ENCODE measurements at regions of chr4 and their contacts with region 1.

Region 1: DNA sequence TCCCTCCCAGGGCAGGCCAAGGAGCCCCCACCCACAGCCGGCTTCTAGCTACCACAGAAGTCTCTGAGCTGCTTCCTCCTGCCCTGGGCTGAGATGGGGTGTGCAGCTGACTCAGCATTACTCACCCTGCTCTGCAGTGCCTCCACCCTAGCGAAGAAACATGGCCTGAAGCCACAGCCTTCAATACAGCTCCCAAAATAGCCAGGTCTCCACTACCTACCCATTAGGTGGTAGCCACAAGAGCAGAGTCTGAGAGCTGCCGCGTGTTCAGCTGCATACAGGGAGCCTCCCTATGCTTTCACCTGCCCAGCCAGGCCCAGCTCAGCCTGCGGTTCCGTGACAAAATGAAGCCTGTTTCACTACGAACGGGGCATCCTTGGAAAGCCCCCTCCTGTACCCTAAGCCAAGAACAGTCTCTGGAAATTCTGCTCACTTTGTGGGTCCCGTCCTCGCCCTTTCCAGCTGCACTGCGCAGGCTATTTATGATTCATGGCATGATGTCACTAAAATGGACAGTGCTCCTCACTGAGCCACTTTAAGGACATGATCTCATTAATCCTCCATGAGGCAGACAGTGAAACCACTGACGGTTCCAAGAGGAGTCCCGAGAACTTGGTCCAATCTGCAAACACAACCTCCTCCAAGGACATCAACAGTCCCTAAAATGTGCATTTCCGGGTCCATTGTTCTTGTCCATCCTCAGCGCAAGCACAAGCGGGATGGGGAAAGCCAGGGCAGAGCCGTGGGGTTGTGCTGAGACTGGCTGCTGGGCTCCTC is 20.2 kb downstream of the WDR1 start:
- DNase-seq: peak; percentile 71
- H3K4me3 ChIP-seq: no peak overlapping the region
- H3K27ac ChIP-seq: peak overlapping the region; percentile 79
- H3K4me1 ChIP-seq: peaks cover 82% of the 10 kb centered on the region
- H3K27me3 ChIP-seq: no peaks in the 10 kb centered on the region
- CTCF ChIP-seq: no peak
- POLR2A ChIP-seq: peak; percentile 45

Region 2: GRCh38 chr4:9792381-9792780 is 304.0 kb before region 1 on chr4:
- CTCF ChIA-PET with region 1: no interaction called
- POLR2A ChIA-PET with region 1: no interaction called
- dilution Hi-C with region 1: no loop called
- intact Hi-C with region 1: no loop called
- DNase-seq: no peak
- H3K4me3 ChIP-seq: no peak overlapping the region
- H3K27ac ChIP-seq: no peak overlapping the region
- H3K4me1 ChIP-seq: no peaks in the 10 kb centered on the region
- H3K27me3 ChIP-seq: no peaks in the 10 kb centered on the region
- CTCF ChIP-seq: no peak
- POLR2A ChIP-seq: no peak

Region 3: DNA sequence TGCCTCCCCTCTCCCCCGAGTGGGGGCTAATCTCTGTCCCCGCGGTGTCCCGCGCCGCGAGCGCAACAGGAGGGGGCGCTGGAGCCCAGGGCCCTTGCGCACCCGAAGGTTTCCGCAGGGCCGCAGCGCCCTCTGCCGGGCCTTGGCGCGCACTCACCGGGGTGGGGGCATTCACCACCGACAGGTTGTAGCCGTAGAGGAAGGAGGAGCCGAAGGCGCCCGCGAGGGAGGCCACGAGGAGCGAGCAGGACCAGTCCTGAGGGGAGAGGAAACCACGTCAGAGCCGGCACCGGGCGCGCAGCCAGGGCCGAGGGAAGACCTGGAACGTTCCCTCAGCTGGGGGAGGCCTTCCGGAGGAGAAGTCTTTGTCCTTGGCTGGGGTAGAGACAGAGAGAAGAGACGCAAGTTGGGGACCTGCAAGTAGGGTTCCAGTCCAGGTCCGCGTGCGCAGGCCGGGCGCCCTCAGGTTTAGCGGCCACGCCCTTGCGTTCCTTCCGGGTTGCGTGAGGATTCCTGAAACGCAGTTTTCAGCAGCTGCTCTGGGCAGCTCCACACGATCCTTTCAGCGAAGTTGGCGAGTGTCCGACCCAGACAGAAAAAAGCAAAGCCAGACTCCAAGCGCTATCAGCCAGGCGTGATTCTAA is 77.4 kb before region 1 on chr4:
- CTCF ChIA-PET with region 1: no interaction called
- POLR2A ChIA-PET with region 1: no interaction called
- dilution Hi-C with region 1: no loop called
- intact Hi-C with region 1: loop called (anchors 2 kb)
- DNase-seq: peak; percentile 95
- H3K4me3 ChIP-seq: peak overlapping the region in 2 of 3 experiments; percentile 25 to 27
- H3K27ac ChIP-seq: peak overlapping the region; percentile 50
- H3K4me1 ChIP-seq: peaks cover 6% of the 10 kb centered on the region
- H3K27me3 ChIP-seq: no peaks in the 10 kb centered on the region
- CTCF ChIP-seq: peak; percentile 100
- POLR2A ChIP-seq: peak; percentile 75

Region 4: DNA sequence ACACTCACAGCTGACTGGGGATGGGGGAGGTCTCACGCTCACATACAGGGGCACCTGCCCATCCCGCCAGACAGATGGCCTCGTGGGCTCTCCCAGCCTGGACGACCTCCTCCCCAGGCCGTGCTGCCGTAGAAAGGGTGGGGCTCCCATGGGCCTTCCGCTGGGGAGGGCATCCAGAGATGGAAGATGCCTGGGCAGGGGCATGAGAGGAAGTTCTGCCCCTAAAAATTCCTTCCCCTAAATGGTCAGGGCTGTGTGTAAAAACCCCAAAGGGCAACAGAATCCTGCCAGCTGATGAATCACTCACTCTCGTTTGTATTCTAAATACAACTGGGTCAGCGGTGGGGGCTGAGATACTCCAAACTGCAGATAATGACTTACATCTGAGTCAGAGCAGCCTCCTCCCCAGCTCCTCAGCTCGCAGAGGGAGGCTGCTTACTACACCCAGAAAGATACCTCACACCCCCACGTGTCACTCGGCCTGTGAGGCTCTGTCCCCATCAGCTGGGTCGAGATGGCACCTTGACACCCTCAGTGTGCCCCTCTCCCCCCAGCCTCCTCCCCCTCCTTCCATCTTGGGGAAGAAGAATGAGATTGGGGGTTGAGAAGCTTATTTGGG is 10.1 kb after region 1 on chr4:
- CTCF ChIA-PET with region 1: interaction called, 9 read pairs
- POLR2A ChIA-PET with region 1: interaction called, 33 read pairs
- dilution Hi-C with region 1: no loop called
- intact Hi-C with region 1: loop called (anchors 1 kb)
- DNase-seq: peak; percentile 90
- H3K4me3 ChIP-seq: no peak overlapping the region
- H3K27ac ChIP-seq: peak overlapping the region; percentile 58
- H3K4me1 ChIP-seq: peaks cover 50% of the 10 kb centered on the region
- H3K27me3 ChIP-seq: no peaks in the 10 kb centered on the region
- CTCF ChIP-seq: no peak
- POLR2A ChIP-seq: peak; percentile 13

Region 5: GRCh38 chr4:10273030-10273429 is 176.6 kb after region 1 on chr4:
- CTCF ChIA-PET with region 1: no interaction called
- POLR2A ChIA-PET with region 1: no interaction called
- dilution Hi-C with region 1: no loop called
- intact Hi-C with region 1: no loop called
- DNase-seq: no peak
- H3K4me3 ChIP-seq: no peak overlapping the region
- H3K27ac ChIP-seq: no peak overlapping the region
- H3K4me1 ChIP-seq: no peaks in the 10 kb centered on the region
- H3K27me3 ChIP-seq: no peaks in the 10 kb centered on the region
- CTCF ChIP-seq: no peak
- POLR2A ChIP-seq: no peak

Measured in endothelial cell of umbilical vein (primary cell).